ENCODE measurements at regions of chr4 and their contacts with region 1.

Region 1: GRCh38 chr4:80058740-80059139 is 14.3 kb downstream of the ANTXR2 start:
- DNase-seq: peak; percentile 52
- H3K4me3 Mint-ChIP-seq: peak overlapping the region; percentile 82
- H3K27ac Mint-ChIP-seq: peak overlapping the region; percentile 99
- H3K4me1 Mint-ChIP-seq: peaks cover 73% of the 10 kb centered on the region
- H3K27me3 Mint-ChIP-seq: no peaks in the 10 kb centered on the region

Region 2: GRCh38 chr4:79979785-79980437 is 78.8 kb before region 1 on chr4:
- intact Hi-C with region 1: no loop called
- DNase-seq: no peak
- H3K4me3 Mint-ChIP-seq: no peak overlapping the region
- H3K27ac Mint-ChIP-seq: no peak overlapping the region
- H3K4me1 Mint-ChIP-seq: no peaks in the 10 kb centered on the region
- H3K27me3 Mint-ChIP-seq: no peaks in the 10 kb centered on the region

Region 3: GRCh38 chr4:80007745-80008149 is 51.0 kb before region 1 on chr4:
- intact Hi-C with region 1: loop called (anchors 1 kb)
- DNase-seq: no peak
- H3K4me3 Mint-ChIP-seq: peak overlapping the region; percentile 41
- H3K27ac Mint-ChIP-seq: peak overlapping the region; percentile 88
- H3K4me1 Mint-ChIP-seq: peaks cover 74% of the 10 kb centered on the region
- H3K27me3 Mint-ChIP-seq: no peaks in the 10 kb centered on the region

Region 4: GRCh38 chr4:80036949-80037685 is 21.6 kb before region 1 on chr4:
- intact Hi-C with region 1: loop called (anchors 2 kb)
- DNase-seq: no peak
- H3K4me3 Mint-ChIP-seq: peak overlapping the region; percentile 71
- H3K27ac Mint-ChIP-seq: peak overlapping the region; percentile 93
- H3K4me1 Mint-ChIP-seq: peaks cover 48% of the 10 kb centered on the region
- H3K27me3 Mint-ChIP-seq: no peaks in the 10 kb centered on the region

Region 5: DNA sequence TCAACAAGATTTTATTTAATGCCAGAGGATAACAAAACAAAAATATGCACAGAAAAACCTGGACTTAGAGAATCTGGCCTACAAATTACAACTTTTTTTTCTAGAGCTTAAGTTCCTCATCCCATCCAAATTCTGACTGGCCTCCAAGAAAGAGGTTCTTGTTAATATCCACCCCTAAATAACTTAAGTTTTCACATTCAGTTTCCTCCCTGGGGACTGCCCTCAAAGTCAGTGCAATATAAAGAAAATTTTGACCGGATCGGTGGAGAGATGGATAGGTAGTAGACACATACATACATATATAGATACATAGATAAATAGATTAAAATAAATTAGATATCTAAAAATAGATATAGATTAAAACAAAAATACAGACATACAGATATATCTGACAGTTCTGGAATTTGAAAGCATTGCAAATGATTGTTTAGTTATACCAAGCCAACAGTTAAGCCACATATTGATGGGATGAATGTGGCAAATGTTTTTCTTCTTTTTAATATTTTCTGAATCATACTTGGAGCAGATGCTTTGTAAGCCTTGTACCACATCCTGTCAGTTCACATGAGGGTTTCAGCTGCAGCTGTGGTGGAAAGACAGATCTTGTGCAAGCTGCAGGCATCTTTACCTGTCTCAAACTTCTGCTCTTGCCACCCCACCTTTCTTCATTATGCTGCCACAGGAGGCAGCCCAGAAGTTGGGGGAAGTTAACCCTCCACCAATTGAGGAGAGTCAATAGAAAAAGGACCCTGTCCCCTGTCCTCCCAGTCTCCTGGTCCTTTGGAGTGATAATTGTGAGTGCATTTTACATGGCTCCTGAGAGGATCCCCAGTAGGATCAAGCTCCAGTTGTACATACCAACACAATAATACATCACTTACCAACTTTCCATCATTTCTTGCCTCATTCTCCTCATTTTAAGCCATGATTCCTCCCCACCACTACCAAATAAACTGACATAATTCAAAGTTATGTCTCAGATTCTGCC is 80.1 kb after region 1 on chr4:
- intact Hi-C with region 1: loop called (anchors 1 kb)
- DNase-seq: peak; percentile 62
- H3K4me3 Mint-ChIP-seq: peak overlapping the region; percentile 62
- H3K27ac Mint-ChIP-seq: peak overlapping the region; percentile 88
- H3K4me1 Mint-ChIP-seq: peaks cover 72% of the 10 kb centered on the region
- H3K27me3 Mint-ChIP-seq: no peaks in the 10 kb centered on the region

Region 6: DNA sequence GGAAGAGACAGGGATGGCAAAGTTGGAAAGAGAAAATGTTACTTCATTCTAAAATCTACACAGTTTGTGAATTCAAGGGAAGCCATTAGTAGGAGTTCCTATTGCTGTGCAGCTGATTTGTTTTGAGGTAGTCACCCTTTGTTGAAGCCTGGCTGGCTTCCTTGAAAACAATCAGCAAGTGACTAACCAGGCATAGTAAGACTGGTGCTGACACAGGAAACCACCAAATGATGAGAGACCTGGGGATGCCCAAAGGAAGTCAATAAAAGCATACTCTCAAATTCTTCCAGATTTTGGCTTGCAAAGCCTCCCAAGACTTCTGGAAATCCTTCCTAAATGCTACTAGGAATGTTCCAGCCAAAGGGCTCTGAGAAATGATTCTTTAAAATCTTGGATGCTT is 114.7 kb after region 1 on chr4:
- intact Hi-C with region 1: loop called (anchors 1 kb)
- DNase-seq: peak; percentile 66
- H3K4me3 Mint-ChIP-seq: peak overlapping the region; percentile 50
- H3K27ac Mint-ChIP-seq: peak overlapping the region; percentile 92
- H3K4me1 Mint-ChIP-seq: peaks cover 68% of the 10 kb centered on the region
- H3K27me3 Mint-ChIP-seq: no peaks in the 10 kb centered on the region